Prostate gland (tissue), 2 donors: ENCODE measurements at regions of chr4 and their contacts with region 1.

Region 1: DNA sequence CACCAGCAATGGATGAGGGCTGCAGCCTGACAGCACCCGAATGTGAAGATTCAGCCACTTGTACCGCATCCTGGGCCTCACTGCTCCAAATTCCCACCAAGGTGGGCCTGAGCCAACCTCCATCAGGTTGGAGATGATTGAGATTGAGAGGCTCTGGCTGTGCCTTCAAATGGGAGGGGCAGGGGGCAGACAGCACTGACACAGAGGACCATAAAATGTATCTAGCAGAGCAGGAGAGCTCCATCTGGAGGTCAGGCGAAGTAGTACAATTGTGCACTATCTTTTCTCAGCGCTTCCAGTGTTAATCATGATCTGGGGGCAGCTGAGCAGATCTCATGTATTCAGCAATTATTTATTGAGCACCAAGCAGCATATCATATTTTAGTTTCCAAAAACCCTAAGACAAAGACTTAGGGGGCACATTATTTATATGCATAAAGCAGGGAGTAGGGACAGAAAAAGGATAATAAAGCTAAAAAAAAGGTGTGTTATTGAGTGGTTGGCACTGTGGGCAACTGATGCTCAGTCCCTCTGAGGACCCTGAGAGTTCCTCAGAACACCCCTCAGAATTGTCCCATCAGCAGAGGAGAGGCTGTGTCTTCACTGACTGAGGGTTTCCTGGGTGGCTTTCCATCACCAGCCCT is 31.6 kb upstream of the C1QTNF7 start:
- DNase-seq: no peak
- H3K4me3 ChIP-seq: no peak overlapping the region
- H3K27ac ChIP-seq: peak overlapping the region in 1 of 2 donors; percentile 21
- H3K4me1 ChIP-seq: no peaks in the 10 kb centered on the region
- H3K27me3 ChIP-seq: no peaks in the 10 kb centered on the region
- CTCF ChIP-seq: peak in 3 of 4 experiments; percentile 60 to 67 (median 64)
- POLR2A ChIP-seq: no peak

Region 2: DNA sequence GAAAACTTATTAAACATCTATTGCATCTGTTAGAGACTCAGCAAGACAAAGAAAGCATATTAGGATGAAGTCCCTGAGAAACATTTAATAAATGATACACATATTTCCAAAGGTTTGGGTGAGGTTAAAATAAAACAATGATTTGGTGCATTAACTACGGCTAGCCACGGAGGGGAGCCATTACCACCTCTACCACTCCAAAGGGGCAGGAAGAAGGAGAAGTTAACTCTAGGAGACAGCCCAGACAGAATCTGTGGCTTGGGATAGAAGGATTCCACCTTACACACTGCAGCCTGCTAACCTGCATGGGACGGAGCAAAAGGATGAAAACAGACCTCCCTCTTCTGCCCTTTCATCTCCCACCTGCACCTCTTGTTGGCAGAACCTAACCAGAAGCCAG is 157.6 kb before region 1 on chr4:
- intact Hi-C with region 1: loop called (anchors 5 kb)
- DNase-seq: no peak
- H3K4me3 ChIP-seq: no peak overlapping the region
- H3K27ac ChIP-seq: no peak overlapping the region
- H3K4me1 ChIP-seq: no peaks in the 10 kb centered on the region
- H3K27me3 ChIP-seq: no peaks in the 10 kb centered on the region
- CTCF ChIP-seq: peak in 3 of 4 experiments; percentile 37 to 50 (median 44)
- POLR2A ChIP-seq: no peak

Region 3: DNA sequence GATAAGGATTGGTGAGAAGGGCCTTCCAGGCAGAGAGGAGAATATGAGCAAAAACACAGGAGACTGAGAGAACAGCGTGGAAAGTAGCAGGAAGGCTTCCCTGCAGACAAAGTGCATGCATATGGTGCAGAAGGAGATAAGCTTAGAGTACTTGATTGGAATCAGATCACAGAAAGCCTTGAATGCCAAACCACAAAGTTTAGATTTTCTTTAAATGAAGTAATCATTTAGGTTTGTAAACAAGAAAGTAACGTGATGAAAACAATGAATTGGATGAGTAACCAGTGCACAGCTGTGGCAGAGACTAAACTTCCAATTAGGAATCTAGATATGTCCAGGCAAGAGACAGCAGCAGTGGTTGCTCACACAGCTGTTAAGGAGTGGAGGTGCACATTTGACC is 52.2 kb before region 1 on chr4:
- intact Hi-C with region 1: loop called (anchors 5 kb)
- DNase-seq: no peak
- H3K4me3 ChIP-seq: no peak overlapping the region
- H3K27ac ChIP-seq: no peak overlapping the region
- H3K4me1 ChIP-seq: no peaks in the 10 kb centered on the region
- H3K27me3 ChIP-seq: no peaks in the 10 kb centered on the region
- CTCF ChIP-seq: no peak
- POLR2A ChIP-seq: no peak

Region 4: DNA sequence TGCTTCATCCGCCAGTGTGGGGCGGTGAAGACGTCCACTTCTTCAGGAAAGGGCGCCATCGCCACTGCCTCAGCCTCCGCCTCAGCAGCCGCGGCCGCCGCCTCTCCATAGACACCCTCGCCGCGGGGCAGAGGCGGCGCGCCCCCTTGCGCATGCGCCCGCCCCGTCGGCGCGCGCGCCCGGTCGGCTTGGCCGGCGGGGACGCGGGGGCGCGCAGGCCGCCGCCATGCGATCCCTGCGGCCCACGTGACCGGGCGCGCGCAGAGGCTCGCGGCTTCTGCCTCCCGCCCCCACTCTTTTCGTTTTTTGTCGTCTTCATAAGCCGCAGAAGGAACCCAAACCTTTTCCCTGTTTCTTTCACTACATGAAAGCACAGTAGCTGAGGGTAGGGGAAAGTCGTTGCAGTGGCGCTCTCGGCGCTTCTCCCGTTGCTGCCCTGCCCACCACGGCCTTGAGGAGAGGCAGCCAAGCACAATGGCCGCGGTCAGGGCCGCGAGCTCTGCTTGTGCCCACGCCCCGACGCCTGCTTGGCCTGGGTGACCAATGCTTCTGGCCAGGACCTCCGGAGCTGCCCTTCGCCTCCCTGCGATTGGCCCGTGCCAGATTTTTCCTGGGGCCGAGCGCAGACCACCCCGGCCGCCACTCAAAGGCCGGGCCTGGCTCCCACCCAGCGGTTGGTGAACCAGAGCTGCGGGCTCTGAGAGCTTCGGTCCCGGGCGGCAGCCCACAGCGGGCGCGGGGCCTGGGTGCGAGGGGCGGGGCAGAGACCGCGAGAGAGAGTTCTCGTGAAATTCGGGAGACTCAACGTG is 259.2 kb after region 1 on chr4 and contains the start of gene FBXL5:
- intact Hi-C with region 1: loop called (anchors 10 kb)
- DNase-seq: peak; percentile 72
- H3K4me3 ChIP-seq: peak within 1 kb of the TSS; percentile 72 to 79
- H3K27ac ChIP-seq: peak within 1 kb of the TSS; percentile 99
- H3K4me1 ChIP-seq: peaks cover 4% of the 10 kb centered on the region
- H3K27me3 ChIP-seq: no peaks in the 10 kb centered on the region
- CTCF ChIP-seq: peak in 1 of 4 experiments; percentile 19
- POLR2A ChIP-seq: peak; percentile 83
- total RNA-seq, gene FBXL5: 86.0 to 123 TPM

Region 5: DNA sequence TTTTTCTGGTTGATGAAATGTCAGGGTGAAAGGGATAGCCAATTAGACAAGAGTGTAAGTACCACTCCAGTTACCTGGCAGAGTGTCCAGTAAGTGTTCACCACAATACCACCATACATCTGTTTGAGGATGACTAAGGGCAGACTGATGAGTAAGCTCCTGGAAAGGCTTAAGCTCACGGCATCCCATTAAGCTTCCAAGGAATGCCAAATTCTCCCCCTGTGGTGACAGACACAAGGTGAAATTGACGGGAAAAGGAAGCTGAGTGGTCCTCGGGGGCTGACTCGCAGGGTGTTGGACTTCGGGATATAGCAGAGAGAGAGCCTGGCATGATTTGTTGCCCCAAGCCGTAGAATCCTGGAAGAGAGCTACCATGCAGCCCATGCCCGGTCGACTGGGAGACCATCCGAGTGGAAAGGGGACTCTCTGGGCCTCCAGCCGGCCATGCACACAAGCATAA is 299.0 kb after region 1 on chr4:
- intact Hi-C with region 1: no loop called
- DNase-seq: no peak
- H3K4me3 ChIP-seq: no peak overlapping the region
- H3K27ac ChIP-seq: no peak overlapping the region
- H3K4me1 ChIP-seq: no peaks in the 10 kb centered on the region
- H3K27me3 ChIP-seq: no peaks in the 10 kb centered on the region
- CTCF ChIP-seq: no peak
- POLR2A ChIP-seq: no peak